Dorsolateral prefrontal cortex (tissue), 120 donors: ENCODE measurements at regions of chr9 and their contacts with region 1.

Region 1: DNA sequence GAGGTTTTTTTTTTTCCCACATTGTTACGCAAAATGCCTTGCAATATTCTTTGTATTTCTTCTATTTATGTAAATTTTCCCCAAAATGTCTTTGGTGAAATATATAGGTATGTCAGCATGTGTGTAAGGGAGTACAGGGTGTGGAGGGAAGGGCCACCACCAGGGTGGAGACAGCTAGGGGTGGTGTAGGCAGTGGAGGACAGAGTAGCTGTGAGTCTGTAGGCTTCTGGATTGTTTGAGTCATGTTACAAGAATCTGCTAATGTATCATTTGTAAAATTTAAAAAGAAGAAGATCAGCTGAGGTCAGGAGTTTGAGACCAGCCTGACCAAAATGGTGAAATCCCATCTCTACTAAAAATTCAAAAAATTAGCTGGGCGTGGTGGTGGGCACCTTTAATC is 175.5 kb downstream of the NXNL2 start:
- DNase-seq: no peak
- H3K4me3 ChIP-seq: no peak overlapping the region
- H3K27ac ChIP-seq: no peak overlapping the region
- H3K27me3 ChIP-seq: no peaks in the 10 kb centered on the region
- CTCF ChIP-seq: no peak

Region 2: DNA sequence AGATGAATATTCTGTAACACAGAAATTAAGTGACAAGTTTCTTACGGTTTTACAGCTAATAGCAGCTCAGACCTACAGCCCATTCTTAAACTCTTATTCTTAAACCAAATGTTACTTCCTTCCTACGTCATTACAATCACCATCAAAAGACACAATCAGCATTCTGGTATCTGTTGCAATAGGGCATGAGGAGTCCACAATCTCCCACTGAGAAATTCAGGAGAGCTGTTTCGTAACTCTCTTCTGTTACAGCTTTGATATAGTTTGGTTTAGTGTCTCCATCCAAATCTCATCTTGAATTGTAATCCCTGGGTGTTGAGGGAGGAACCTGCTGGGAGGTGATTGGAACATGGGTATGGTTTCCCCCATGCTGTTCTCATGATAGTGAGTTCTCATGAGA is 1926.6 kb before region 1 on chr9:
- intact Hi-C with region 1: loop called in 1 of 2 experiments (anchors 10 kb)
- DNase-seq: no peak
- H3K4me3 ChIP-seq: no peak overlapping the region
- H3K27ac ChIP-seq: no peak overlapping the region
- H3K27me3 ChIP-seq: peaks cover 0 to 11% (median 0%) of the 10 kb centered on the region in 45 donors
- CTCF ChIP-seq: no peak